Activated CD4-positive, alpha-beta T cell treated with anti-CD3 and anti-CD28 coated beads, Interleukin-2, amount 10 ng/mL, durations not matched to agents 24 days and 14 days (primary cell): ENCODE measurements at regions of chr17 and their contacts with region 1.

Region 1: GRCh38 chr17:8057691-8058114 is 18.8 kb downstream of the ALOX15B start:
- DNase-seq: peak; percentile 84
- H3K4me3 Mint-ChIP-seq: no peak overlapping the region
- H3K27ac Mint-ChIP-seq: no peak overlapping the region
- H3K4me1 Mint-ChIP-seq: peaks cover 15% of the 10 kb centered on the region
- H3K27me3 Mint-ChIP-seq: peaks cover 55% of the 10 kb centered on the region

Region 2: DNA sequence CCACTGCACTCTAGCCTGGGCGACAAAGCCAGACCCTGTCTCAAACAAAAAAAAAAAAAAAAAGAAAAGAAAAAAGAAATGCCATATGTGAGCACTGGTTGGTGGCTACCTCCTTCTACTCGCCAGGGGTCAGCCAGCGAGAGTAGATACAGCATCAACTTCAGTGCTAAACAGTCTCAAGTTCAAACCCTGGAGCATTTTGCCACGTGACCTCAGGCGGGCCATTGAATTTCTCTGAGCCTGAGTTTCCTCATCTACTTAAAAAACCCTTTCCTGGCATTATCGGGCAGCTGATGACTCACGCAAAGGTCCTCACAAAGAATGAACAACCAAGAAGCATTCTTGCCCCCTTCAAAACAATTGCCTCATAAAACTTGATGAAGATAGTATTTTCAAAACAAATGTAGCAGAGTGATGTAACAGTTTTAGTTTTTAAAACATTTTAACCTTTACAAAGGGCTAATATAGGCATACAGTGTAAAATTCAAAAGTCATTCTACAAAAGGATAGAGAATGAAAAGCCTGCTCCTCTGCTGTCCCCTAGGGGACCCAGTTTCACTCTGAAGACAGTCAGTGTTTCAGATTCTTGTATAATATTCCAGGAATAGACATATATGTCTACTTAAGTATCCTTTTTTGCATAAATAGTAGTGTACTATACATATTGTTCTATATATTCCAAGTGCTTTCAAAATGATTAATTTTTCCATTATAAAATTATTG is 311.8 kb before region 1 on chr17:
- intact Hi-C with region 1: loop called (anchors 2 kb)
- DNase-seq: no peak
- H3K4me3 Mint-ChIP-seq: no peak overlapping the region
- H3K27ac Mint-ChIP-seq: no peak overlapping the region
- H3K4me1 Mint-ChIP-seq: no peaks in the 10 kb centered on the region
- H3K27me3 Mint-ChIP-seq: peaks cover 18% of the 10 kb centered on the region

Region 3: DNA sequence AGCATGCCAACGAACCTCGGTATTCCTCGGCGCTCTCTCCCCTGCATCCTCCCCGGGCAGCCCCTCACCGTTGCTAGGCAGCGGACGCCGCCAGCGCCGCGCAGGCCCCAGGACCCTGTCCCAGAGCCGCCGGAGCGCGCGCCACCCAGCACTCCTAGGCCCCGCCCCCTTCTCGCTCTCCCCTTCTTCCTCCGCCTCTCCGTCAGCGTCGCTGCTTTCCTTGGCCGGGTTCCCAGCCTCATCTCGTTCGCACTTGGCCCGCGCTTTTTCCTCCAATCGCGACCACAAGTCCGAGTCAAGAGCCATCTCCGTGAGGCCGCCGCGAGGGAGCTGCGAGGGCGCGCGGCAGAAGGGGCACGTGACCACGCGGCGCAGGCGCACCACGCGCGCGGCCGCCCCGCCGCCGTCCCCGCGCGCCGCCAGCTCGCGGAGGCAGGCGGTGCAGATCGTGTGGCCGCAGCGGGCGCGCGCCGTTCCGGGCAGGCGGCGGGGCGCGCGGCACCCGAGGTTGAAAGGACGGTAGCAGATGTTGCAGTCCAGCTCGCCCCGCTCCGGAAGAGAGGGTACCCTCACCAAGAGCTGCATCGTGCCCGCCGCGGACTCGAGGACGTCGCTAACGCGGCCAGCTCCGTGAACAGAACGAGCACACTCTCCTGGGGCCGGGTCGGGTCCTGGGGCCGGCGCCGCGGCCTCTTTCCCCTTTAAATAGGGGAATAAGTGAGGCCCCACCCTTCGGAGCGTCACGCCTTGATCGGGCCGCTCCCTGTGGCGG is 141.9 kb before region 1 on chr17 and contains the start of gene RNF227:
- intact Hi-C with region 1: loop called (anchors 5 kb)
- DNase-seq: peak; percentile 94
- H3K4me3 Mint-ChIP-seq: peak within 1 kb of the TSS; percentile 97
- H3K27ac Mint-ChIP-seq: peak within 1 kb of the TSS; percentile 97
- H3K4me1 Mint-ChIP-seq: peaks cover 26% of the 10 kb centered on the region
- H3K27me3 Mint-ChIP-seq: no peaks in the 10 kb centered on the region
- total RNA-seq, gene RNF227: 6.2 and 6.5 TPM in 2 replicates

Region 4: GRCh38 chr17:8016632-8017478 is 40.8 kb before region 1 on chr17:
- intact Hi-C with region 1: loop called (anchors 5 kb)
- DNase-seq: peak; percentile 89
- H3K4me3 Mint-ChIP-seq: peak overlapping the region; percentile 80
- H3K27ac Mint-ChIP-seq: no peak overlapping the region
- H3K4me1 Mint-ChIP-seq: peaks cover 10% of the 10 kb centered on the region
- H3K27me3 Mint-ChIP-seq: peaks cover 17% of the 10 kb centered on the region

Region 5: GRCh38 chr17:8079291-8080207 is 21.8 kb after region 1 on chr17:
- intact Hi-C with region 1: loop called (anchors 1 kb)
- DNase-seq: peak; percentile 93
- H3K4me3 Mint-ChIP-seq: peak overlapping the region; percentile 85
- H3K27ac Mint-ChIP-seq: peak overlapping the region; percentile 86
- H3K4me1 Mint-ChIP-seq: peaks cover 9% of the 10 kb centered on the region
- H3K27me3 Mint-ChIP-seq: peaks cover 17% of the 10 kb centered on the region